ENCODE measurements at regions of chr10 and their contacts with region 1.

Region 1: GRCh38 chr10:5873515-5873995 is 16.1 kb downstream of the ANKRD16 start:
- DNase-seq: peak; percentile 79
- H3K4me3 ChIP-seq: no peak overlapping the region
- H3K27ac ChIP-seq: no peak overlapping the region
- H3K4me1 ChIP-seq: peaks cover 10% of the 10 kb centered on the region
- CTCF ChIP-seq: peak; percentile 86

Region 2: DNA sequence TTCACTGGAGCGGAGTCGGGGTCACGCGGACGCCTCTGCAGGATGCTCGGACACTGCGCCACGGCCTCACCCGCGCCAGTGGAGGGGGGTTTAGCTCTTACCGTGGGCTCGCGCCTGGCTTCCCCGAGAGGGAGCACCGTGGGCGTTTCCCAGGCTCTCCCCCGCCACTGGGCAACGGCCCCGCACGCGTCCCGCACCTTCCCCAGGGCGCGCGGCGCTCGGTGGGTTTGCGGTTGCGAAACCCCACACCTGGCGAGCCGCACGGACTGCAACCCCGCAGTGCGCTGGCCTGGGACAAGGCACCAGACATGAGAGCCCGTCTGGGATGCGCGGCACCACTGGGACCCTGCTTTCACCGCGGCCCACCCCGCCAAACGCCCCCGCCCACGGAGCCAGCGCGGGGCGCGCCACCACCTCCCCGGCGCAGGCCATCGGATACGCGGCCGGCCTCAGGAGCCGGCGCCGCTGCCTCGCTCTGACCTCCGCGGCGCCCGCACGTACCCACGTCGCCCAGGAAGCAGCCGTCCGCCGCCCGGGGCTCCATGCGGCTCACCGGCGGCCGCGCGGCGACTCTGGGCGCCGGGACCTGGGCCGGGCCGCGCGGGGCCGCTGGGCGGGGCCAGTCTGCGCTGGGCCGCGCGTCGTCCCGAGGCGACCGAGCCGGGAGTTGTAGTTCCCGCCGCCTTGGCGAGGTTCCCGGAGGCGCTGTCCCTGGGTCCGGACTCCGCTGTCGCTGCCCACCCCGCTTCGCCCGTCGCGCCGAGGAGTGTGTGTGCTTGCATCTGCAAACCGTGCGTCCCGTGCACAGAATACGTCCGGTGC is 207.3 kb before region 1 on chr10 and contains the start of gene ASB13:
- CTCF ChIA-PET with region 1: no interaction called
- POLR2A ChIA-PET with region 1: no interaction called
- intact Hi-C with region 1: no loop called
- DNase-seq: peak; percentile 55
- H3K4me3 ChIP-seq: peak within 1 kb of the TSS; percentile 78
- H3K27ac ChIP-seq: peak within 1 kb of the TSS; percentile 100
- H3K4me1 ChIP-seq: peaks cover 80% of the 10 kb centered on the region
- CTCF ChIP-seq: 0 out of 2 replicates have a peak, but pooled peaks have one; percentile 21
- total RNA-seq, gene ASB13: 23.2 and 25.6 TPM in 2 replicates

Region 3: GRCh38 chr10:5860066-5860465 is 13.5 kb before region 1 on chr10:
- CTCF ChIA-PET with region 1: no interaction called
- POLR2A ChIA-PET with region 1: interaction called, 11 read pairs
- intact Hi-C with region 1: no loop called
- DNase-seq: no peak
- H3K4me3 ChIP-seq: no peak overlapping the region
- H3K27ac ChIP-seq: no peak overlapping the region
- H3K4me1 ChIP-seq: peaks cover 13% of the 10 kb centered on the region
- CTCF ChIP-seq: no peak